ENCODE measurements at regions of chr5 and their contacts with region 1.

Region 1: DNA sequence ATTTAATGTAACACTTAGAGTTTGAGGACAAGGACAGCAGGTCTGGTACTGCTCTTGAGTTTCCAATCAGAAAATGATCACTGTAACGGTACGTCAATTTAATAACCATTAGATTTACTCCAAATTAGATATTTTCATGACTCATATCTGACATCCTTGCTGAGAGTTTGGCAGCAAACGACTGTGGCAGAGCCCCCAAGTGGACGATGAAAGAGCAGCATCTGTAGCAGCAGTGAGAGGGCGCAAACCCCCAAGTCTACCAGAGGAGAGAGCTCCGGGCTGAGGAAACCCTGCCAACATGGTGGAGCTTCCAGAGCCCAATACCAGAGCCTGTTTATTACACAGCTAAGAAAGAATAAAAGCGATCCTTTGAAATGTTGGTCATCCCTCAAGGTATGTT is 73.2 kb upstream of the EPB41L4A start:
- DNase-seq: peak; percentile 27 to 56
- H3K4me3 ChIP-seq: no peak overlapping the region
- H3K27ac ChIP-seq: no peak overlapping the region
- H3K4me1 ChIP-seq: no peaks in the 10 kb centered on the region
- H3K27me3 ChIP-seq: no peaks in the 10 kb centered on the region
- CTCF ChIP-seq: peak; percentile 82 to 98 (median 82)
- EP300 ChIP-seq: no peak
- POLR2A ChIP-seq: no peak
- RAD21 ChIP-seq: peak; percentile 67 to 75

Region 2: GRCh38 chr5:112174959-112175594 is 317.2 kb before region 1 on chr5:
- CTCF ChIA-PET with region 1: interaction called, 22 read pairs
- POLR2A ChIA-PET with region 1: no interaction called
- DNase-seq: no peak
- H3K4me3 ChIP-seq: no peak overlapping the region
- H3K27ac ChIP-seq: no peak overlapping the region
- H3K4me1 ChIP-seq: no peaks in the 10 kb centered on the region
- H3K27me3 ChIP-seq: no peaks in the 10 kb centered on the region
- CTCF ChIP-seq: peak in 2 of 3 experiments; percentile 60 to 63; a peak in 3 of 4 replicates
- EP300 ChIP-seq: no peak
- POLR2A ChIP-seq: no peak
- RAD21 ChIP-seq: peak; percentile 82 to 87

Region 3: GRCh38 chr5:112372539-112372938 is 119.8 kb before region 1 on chr5:
- CTCF ChIA-PET with region 1: interaction called, 11 read pairs
- POLR2A ChIA-PET with region 1: no interaction called
- DNase-seq: no peak
- H3K4me3 ChIP-seq: no peak overlapping the region
- H3K27ac ChIP-seq: no peak overlapping the region
- H3K4me1 ChIP-seq: no peaks in the 10 kb centered on the region
- H3K27me3 ChIP-seq: no peaks in the 10 kb centered on the region
- CTCF ChIP-seq: peak in 1 of 3 experiments; percentile 31; a peak in 2 of 4 replicates
- EP300 ChIP-seq: no peak
- POLR2A ChIP-seq: no peak
- RAD21 ChIP-seq: peak; percentile 12 to 22; a peak in 2 of 4 replicates

Region 4: DNA sequence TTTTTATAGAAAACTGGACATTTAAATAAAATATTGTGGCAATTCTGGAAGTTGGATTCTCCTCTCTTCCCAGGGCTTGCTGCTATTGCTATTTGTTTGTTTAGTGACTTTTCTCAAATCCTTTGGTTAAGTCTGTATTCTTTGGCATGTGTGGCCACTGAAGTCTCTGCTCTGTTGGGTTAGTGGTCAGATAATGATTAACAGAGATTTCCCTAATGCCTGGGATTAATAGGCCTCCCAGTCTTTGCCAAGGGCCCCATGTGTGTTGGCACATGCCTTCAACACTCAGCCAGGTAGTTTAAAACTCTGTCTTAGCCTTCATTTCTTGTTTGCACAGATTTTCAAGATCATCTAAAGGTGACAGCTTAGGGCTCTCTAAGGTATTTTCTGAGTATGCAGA is 19.6 kb after region 1 on chr5:
- CTCF ChIA-PET with region 1: interaction called, 19 read pairs
- POLR2A ChIA-PET with region 1: no interaction called
- DNase-seq: no peak
- H3K4me3 ChIP-seq: no peak overlapping the region
- H3K27ac ChIP-seq: no peak overlapping the region
- H3K4me1 ChIP-seq: no peaks in the 10 kb centered on the region
- H3K27me3 ChIP-seq: no peaks in the 10 kb centered on the region
- CTCF ChIP-seq: no peak
- EP300 ChIP-seq: no peak
- POLR2A ChIP-seq: no peak
- RAD21 ChIP-seq: no peak

Region 5: GRCh38 chr5:112551419-112552032 is 59.2 kb after region 1 on chr5:
- CTCF ChIA-PET with region 1: interaction called, 20 read pairs
- POLR2A ChIA-PET with region 1: no interaction called
- DNase-seq: no peak
- H3K4me3 ChIP-seq: no peak overlapping the region
- H3K27ac ChIP-seq: no peak overlapping the region
- H3K4me1 ChIP-seq: no peaks in the 10 kb centered on the region
- H3K27me3 ChIP-seq: no peaks in the 10 kb centered on the region
- CTCF ChIP-seq: peak in 2 of 3 experiments; percentile 61 to 63; a peak in 2 of 4 replicates
- EP300 ChIP-seq: no peak
- POLR2A ChIP-seq: no peak
- RAD21 ChIP-seq: peak; percentile 86 to 87